ENCODE measurements at regions of chr14 and their contacts with region 1.

Region 1: DNA sequence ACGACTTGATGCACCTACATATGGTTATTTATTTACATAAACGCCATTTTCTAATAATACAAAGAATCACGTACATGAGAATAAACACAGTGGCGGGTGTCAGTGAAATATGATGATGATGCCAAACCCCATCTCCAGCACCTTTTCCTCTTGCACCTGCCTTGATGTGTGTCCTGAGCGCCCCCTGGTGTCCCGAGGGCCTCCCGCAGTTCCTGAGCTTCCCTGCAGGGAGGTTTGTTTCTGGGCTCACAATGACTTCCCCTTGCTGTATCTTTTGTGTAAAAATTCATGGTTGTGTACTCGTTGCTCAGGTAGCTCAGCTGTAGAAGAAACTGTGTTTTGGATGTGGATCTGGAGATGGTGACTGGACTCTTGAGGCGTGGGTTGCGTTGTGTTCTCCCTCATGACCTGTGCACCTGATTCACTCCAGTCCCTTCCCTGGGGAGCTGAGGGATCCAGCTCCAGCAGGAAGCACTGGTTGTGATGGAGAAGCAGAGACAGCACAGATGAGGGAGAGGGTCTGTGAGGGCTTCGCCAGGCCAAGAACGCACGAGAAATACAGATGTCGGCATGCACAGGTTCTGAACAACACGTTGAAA is 1037.8 kb downstream of the TMEM121 start:
- DNase-seq: no peak
- H3K4me3 ChIP-seq: no peak overlapping the region
- H3K27ac ChIP-seq: no peak overlapping the region
- H3K4me1 ChIP-seq: no peaks in the 10 kb centered on the region
- H3K27me3 ChIP-seq: no peaks in the 10 kb centered on the region
- CTCF ChIP-seq: peak; percentile 46 to 57

Region 2: DNA sequence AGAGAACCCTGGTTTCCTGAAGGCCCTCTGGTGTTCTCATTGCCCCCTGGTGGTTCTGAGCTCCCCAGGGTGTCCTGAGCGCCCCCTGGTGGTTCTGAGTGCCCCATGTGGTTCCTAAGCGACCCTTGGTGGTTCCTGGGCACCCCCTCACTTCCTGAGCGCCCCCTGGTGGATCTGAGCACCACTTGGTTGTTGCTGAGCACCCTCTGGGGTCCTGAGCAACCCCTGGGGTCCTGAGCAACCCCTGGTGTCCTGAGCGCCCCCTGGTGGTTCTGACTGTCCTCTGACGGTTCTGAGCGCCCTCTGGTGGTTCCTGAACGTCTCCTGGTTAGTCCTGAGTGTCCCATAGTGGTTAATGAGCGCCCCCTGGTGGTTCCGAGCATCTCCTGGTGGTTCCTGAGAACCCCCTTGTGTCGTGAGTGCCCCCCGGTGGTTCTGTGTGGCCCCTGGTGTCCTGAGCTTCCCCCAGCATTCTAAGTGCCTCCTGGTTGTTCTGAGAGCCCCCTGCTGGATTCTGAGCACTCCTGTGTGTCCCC is 469.4 kb before region 1 on chr14:
- CTCF ChIA-PET with region 1: no interaction called
- dilution Hi-C with region 1: no loop called
- in situ Hi-C with region 1: no loop called
- intact Hi-C with region 1: loop called (anchors 5 kb)
- DNase-seq: no peak
- H3K4me3 ChIP-seq: no peak overlapping the region
- H3K27ac ChIP-seq: no peak overlapping the region
- H3K4me1 ChIP-seq: no peaks in the 10 kb centered on the region
- H3K27me3 ChIP-seq: no peaks in the 10 kb centered on the region
- CTCF ChIP-seq: peak in 1 of 2 donors; percentile 17

Region 3: DNA sequence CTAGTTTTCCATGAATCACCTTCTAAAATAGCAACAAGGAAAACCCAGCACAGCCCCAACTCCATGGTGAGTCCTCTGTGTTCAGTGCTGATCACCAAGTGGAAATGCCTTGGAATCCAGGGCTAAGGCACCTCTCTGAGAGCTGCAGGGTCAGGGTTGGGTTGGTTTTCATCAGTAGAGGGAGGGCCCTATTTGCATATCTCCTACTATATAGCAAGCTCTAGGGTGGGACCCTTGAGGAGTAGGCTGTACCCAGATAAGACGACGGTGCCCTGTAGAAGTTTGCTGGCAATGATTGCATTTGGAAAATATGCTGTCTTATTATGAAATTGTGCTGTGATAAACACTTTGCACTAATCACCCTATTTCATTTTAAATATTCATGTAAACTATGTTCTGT is 26.0 kb before region 1 on chr14:
- CTCF ChIA-PET with region 1: no interaction called
- dilution Hi-C with region 1: no loop called
- in situ Hi-C with region 1: no loop called
- intact Hi-C with region 1: no loop called
- DNase-seq: no peak
- H3K4me3 ChIP-seq: no peak overlapping the region
- H3K27ac ChIP-seq: no peak overlapping the region
- H3K4me1 ChIP-seq: no peaks in the 10 kb centered on the region
- H3K27me3 ChIP-seq: no peaks in the 10 kb centered on the region
- CTCF ChIP-seq: no peak

Measured in mammary epithelial cell (primary cell).